ENCODE measurements at regions of chr11 and their contacts with region 1.

Region 1: DNA sequence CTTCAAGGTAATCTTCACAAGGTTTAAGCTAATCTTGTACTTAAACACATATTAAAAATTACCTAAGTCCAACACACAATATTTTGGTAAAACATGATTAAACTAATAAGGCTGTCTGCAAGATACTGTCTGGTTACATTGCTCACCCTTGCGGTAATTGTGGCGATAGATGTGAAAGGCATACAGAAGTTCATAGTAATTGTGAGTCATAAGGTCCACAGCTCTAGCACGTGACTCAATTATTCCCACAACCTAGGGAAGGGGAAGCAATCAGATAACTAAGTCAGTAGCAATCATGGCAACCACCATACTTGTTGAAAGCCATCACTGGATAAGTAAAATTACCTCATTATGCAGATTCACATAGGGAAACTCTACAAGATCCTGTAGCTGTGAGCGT is 30.5 kb upstream of the FNBP4 start:
- DNase-seq: no peak
- ATAC-seq: no peak
- H3K4me3 ChIP-seq: no peak overlapping the region
- H3K4me3 Mint-ChIP-seq: no peak overlapping the region
- H3K27ac ChIP-seq: no peak overlapping the region
- H3K27ac Mint-ChIP-seq: no peak overlapping the region
- H3K4me1 ChIP-seq: no peaks in the 10 kb centered on the region
- H3K4me1 Mint-ChIP-seq: no peaks in the 10 kb centered on the region
- H3K27me3 ChIP-seq: no peaks in the 10 kb centered on the region
- H3K27me3 Mint-ChIP-seq: no peaks in the 10 kb centered on the region
- CTCF ChIP-seq: no peak

Region 2: DNA sequence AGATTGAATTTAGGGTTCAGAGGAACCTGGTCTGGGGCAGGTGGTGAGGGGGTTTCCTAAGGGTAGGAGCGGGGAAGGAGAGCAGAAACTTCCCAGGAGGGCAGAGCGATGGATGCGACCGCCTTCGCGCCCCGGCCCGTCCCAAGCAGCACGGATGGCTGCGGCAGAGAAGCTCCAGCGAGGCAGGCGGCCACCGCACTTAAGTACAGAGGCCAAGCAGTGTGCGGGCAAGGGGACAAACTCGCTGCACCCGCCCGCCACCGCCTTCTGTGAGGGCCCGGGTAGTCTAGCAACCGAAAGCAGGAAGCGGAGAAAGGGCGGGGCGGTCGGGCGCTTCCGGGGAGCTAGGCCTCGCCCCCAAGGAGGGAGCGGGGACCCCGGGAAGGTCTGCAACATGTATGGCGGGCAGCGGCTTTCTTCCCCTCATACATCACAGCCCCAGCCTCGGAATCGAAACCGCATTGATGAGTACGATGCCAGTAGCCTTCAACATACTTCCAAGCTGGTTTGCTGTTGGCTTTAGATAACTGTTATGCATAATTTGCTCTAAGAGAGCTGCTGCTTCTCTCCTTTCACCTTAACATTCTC is 82.5 kb before region 1 on chr11 and contains the start of gene AGBL2:
- CTCF ChIA-PET with region 1: interaction called, 10 read pairs
- POLR2A ChIA-PET with region 1: no interaction called
- intact Hi-C with region 1: no loop called
- DNase-seq: peak; percentile 88
- ATAC-seq: peak; percentile 99
- H3K4me3 ChIP-seq: peak within 1 kb of the TSS; percentile 81 to 95 (median 94)
- H3K4me3 Mint-ChIP-seq: peak within 1 kb of the TSS; percentile 97
- H3K27ac ChIP-seq: peak within 1 kb of the TSS; percentile 84 to 97
- H3K27ac Mint-ChIP-seq: peak within 1 kb of the TSS; percentile 97
- H3K4me1 ChIP-seq: peaks cover 11 to 15% of the 10 kb centered on the region in 2 donors
- H3K4me1 Mint-ChIP-seq: peaks cover 14% of the 10 kb centered on the region
- H3K27me3 ChIP-seq: no peaks in the 10 kb centered on the region
- H3K27me3 Mint-ChIP-seq: no peaks in the 10 kb centered on the region
- CTCF ChIP-seq: no peak
- total RNA-seq, gene AGBL2: 13.6 and 17.0 TPM in 2 replicates

Region 3: GRCh38 chr11:47731475-47731874 is 66.2 kb before region 1 on chr11:
- CTCF ChIA-PET with region 1: no interaction called
- POLR2A ChIA-PET with region 1: no interaction called
- intact Hi-C with region 1: loop called (anchors 10 kb)
- DNase-seq: no peak
- ATAC-seq: no peak
- H3K4me3 ChIP-seq: no peak overlapping the region
- H3K4me3 Mint-ChIP-seq: no peak overlapping the region
- H3K27ac ChIP-seq: no peak overlapping the region
- H3K27ac Mint-ChIP-seq: no peak overlapping the region
- H3K4me1 ChIP-seq: no peaks in the 10 kb centered on the region
- H3K4me1 Mint-ChIP-seq: no peaks in the 10 kb centered on the region
- H3K27me3 ChIP-seq: no peaks in the 10 kb centered on the region
- H3K27me3 Mint-ChIP-seq: no peaks in the 10 kb centered on the region
- CTCF ChIP-seq: no peak